Activated CD4-positive, alpha-beta T cell treated with anti-CD3 and anti-CD28 coated beads for 36 hours (primary cell): ENCODE measurements at regions of chr3 and their contacts with region 1.

Region 1: DNA sequence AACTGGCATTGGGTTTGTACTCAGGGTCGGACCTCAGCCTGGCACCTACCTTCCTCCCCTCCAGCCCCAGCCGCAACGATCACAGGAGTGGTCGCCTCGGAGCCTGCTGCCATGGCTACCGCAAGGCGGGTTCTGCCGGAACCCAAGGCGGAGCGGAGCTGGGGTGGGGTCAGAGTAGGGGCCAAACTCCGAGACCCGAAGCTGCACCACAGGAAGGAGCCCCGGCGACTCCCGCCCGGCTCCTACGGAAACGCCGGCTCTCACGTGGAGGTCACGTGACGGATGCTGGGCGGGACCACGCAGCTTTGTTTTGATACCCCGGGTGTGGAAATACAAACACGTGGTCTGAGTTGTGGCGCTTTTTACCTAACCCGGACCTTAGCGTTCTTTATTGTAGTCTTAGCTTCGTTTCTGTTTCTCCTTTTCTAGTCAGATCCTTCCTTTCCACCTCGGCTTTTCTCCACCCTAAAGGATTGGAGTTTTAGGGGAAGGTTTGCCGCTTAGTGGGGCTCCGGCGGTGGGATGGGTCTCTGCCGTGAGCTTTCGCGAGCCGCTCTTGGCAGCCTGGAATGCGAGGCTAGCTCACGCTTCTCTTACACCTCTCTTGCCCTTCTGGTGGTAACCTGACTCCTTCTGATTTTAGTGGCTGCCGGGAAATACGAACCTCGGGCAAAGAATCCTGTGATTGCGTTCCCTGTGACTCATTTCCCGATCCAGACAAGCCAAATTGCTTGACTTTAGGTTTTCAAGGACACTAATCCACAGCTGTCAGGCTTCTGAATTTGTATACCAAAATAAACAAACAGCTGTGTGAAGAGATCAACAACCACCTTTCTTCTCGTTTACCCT is at the start of gene HSPBAP1:
- DNase-seq: peak; percentile 93
- ATAC-seq: peak; percentile 67
- H3K4me3 Mint-ChIP-seq: no peak within 1 kb of the TSS
- H3K27ac Mint-ChIP-seq: peak within 1 kb of the TSS; percentile 86
- H3K4me1 Mint-ChIP-seq: peaks cover 32% of the 10 kb centered on the region
- H3K27me3 Mint-ChIP-seq: no peaks in the 10 kb centered on the region
- total RNA-seq, gene HSPBAP1: 3.9 to 4.4 TPM

Region 2: DNA sequence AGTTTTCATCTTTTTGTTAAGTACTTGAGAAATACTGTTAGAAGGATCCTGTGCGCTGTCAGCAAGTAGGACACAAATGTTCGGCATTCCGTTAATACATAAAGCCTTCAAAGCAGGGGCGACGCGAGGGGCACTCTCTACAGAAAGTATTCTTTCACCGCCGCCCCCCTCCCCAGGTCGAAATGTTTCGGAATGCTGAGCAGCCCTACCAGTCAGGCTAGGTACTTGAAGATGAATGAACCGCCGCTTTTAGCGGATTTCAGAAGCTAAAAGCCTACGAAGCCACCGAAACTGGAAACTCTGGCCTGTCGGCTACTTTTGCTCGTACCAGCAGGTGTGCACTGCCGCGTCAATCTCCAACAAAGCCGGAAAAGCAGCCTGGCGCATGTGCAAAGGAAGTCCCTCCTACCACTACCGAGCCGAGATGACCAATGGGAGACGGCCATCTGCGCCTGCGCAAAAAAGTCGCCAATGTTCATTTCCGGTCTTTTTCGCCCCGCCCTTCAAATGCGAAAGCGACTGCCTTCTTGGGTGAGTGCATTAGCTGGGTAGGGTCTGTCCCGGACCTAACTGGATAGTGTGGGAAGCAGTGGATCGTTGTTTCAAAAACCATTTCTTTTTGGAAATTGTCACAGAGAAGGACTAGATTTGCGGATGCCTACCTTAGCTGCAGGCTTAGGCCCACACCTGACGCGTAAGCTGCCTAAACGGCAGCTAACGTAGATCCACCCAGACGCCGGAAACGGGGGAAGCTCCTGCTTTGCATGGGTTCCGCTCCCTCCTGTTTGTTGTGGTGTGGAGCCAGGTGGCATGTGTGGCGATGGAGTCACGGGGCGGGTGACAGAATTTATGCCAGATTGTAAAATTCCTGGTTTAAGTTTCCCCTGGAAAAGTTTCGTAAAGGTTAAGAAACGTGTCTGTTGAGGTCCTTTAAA is 377.8 kb before region 1 on chr3 and contains the start of gene WDR5B:
- CTCF ChIA-PET with region 1: no interaction called
- POLR2A ChIA-PET with region 1: no interaction called
- intact Hi-C with region 1: loop called (anchors 1 to 10 kb)
- DNase-seq: peak; percentile 99
- ATAC-seq: peak; percentile 91
- H3K4me3 Mint-ChIP-seq: peak within 1 kb of the TSS; percentile 96
- H3K27ac Mint-ChIP-seq: peak within 1 kb of the TSS; percentile 96
- H3K4me1 Mint-ChIP-seq: peaks cover 46% of the 10 kb centered on the region
- H3K27me3 Mint-ChIP-seq: no peaks in the 10 kb centered on the region
- total RNA-seq, gene WDR5B: 2.6 to 2.8 TPM

Region 3: DNA sequence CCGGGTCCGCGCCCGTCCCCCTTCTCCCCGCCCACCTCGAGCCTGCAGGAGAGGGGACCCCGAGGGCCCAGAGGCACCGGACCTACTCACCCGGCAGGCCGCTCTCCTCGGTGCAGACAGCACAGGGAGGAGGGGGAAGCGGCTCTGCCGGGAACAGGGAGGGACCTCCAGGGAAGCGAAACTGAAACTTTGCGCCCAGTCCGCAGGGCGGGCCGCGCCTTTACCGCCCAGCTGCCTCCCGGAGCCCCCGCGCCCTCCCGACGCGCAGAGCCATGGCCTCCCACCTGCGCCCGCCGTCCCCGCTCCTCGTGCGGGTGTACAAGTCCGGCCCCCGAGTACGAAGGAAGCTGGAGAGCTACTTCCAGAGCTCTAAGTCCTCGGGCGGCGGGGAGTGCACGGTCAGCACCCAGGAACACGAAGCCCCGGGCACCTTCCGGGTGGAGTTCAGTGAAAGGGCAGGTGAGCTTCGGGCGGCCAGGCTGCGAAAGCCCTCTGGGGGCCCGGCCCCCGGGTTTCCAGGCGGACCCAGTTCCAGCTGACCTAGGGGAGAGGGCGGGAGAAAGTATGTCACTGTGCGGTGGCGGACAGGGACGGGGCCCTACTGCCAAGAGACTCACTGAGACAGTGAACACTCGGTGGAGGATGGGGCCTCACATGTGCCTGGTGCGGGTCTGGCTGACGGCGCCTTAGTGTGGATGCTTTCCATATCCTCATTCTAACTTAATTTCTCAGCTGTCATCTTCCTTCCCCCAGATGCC is 229.5 kb before region 1 on chr3 and contains the starts of genes DTX3L and PARP9:
- CTCF ChIA-PET with region 1: no interaction called
- POLR2A ChIA-PET with region 1: no interaction called
- intact Hi-C with region 1: loop called in 1 of 2 experiments (anchors 5 kb)
- DNase-seq: peak; percentile 89
- ATAC-seq: peak; percentile 83
- H3K4me3 Mint-ChIP-seq: peak within 1 kb of the TSS; percentile 83
- H3K27ac Mint-ChIP-seq: peak within 1 kb of the TSS; percentile 97
- H3K4me1 Mint-ChIP-seq: peaks cover 67% of the 10 kb centered on the region
- H3K27me3 Mint-ChIP-seq: no peaks in the 10 kb centered on the region
- total RNA-seq, gene DTX3L: 42.0 to 52.0 TPM
- total RNA-seq, gene PARP9: 39.9 to 46.0 TPM

Region 4: GRCh38 chr3:123036352-123037014 is 242.7 kb after region 1 on chr3:
- CTCF ChIA-PET with region 1: no interaction called
- POLR2A ChIA-PET with region 1: no interaction called
- intact Hi-C with region 1: no loop called
- DNase-seq: no peak
- ATAC-seq: no peak
- H3K4me3 Mint-ChIP-seq: no peak overlapping the region
- H3K27ac Mint-ChIP-seq: no peak overlapping the region
- H3K4me1 Mint-ChIP-seq: no peaks in the 10 kb centered on the region
- H3K27me3 Mint-ChIP-seq: peaks cover 28% of the 10 kb centered on the region

Region 5: GRCh38 chr3:123066896-123067688 is 273.3 kb after region 1 on chr3 and contains the start of gene PDIA5:
- CTCF ChIA-PET with region 1: no interaction called
- POLR2A ChIA-PET with region 1: interaction called, 3 read pairs
- intact Hi-C with region 1: loop called in 1 of 2 experiments (anchors 2 kb)
- DNase-seq: peak; percentile 87
- ATAC-seq: peak; percentile 83
- H3K4me3 Mint-ChIP-seq: peak within 1 kb of the TSS; percentile 87
- H3K27ac Mint-ChIP-seq: peak within 1 kb of the TSS; percentile 80
- H3K4me1 Mint-ChIP-seq: peaks cover 40% of the 10 kb centered on the region
- H3K27me3 Mint-ChIP-seq: no peaks in the 10 kb centered on the region
- total RNA-seq, gene PDIA5: 19.5 to 20.7 TPM

Region 6: GRCh38 chr3:123201566-123202427 is 408.0 kb after region 1 on chr3 and contains the start of gene SEC22A:
- CTCF ChIA-PET with region 1: no interaction called
- POLR2A ChIA-PET with region 1: no interaction called
- intact Hi-C with region 1: loop called (anchors 1 to 5 kb)
- DNase-seq: peak; percentile 98
- ATAC-seq: peak; percentile 99
- H3K4me3 Mint-ChIP-seq: peak within 1 kb of the TSS; percentile 96
- H3K27ac Mint-ChIP-seq: peak within 1 kb of the TSS; percentile 97
- H3K4me1 Mint-ChIP-seq: peaks cover 28% of the 10 kb centered on the region
- H3K27me3 Mint-ChIP-seq: no peaks in the 10 kb centered on the region
- total RNA-seq, gene SEC22A: 13.2 to 16.3 TPM

Region 7: DNA sequence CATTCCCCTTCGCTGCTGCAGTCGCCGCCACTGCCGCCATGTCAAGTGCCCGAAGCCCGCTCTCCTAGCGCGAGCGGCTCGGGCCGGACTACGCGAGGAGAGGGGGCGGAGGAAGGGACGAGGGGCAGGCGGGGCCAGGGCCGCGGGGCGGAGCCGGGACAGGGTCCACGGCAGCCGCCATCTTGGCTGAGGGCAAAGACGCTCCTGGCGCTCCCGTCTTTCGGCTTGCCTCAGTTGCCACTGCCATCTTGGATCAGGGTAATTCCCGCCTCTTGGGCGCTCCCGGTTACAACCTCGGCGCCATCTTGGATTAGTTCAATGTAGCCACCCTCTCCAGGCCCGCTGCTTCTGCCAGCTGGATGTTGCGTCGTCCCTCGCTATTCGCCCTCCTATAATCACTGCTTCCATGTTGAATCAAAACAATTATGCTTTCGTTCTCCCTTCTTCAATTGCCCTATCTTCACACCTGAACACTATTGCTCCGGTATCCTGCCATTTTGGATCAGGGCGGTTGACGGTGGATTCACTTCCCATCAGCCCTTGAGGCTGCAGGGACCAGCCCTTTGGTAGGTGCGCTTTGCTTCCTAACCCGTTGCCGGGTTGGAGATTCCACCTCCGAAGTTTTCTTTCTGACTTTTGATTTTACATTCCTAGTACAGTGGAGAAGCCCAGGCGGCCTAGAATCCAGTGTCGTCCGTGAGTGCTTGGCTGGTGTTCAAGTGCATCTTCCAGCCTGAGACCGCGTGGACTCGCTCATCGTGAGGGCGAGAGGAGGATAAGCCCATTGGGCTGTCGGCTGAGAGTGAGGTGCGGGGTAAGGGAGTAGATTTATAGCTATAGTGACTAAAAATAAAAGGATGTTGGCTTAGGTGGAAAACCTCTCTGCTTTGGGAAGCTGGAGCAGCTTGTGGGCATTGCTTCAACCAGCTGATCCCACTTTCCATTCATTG is 791.5 kb after region 1 on chr3 and contains the start of gene HACD2:
- CTCF ChIA-PET with region 1: no interaction called
- POLR2A ChIA-PET with region 1: no interaction called
- intact Hi-C with region 1: loop called in 1 of 2 experiments (anchors 10 kb)
- DNase-seq: peak; percentile 97
- ATAC-seq: peak; percentile 93
- H3K4me3 Mint-ChIP-seq: no peak within 1 kb of the TSS
- H3K27ac Mint-ChIP-seq: peak within 1 kb of the TSS; percentile 87
- H3K4me1 Mint-ChIP-seq: peaks cover 21% of the 10 kb centered on the region
- H3K27me3 Mint-ChIP-seq: no peaks in the 10 kb centered on the region
- total RNA-seq, gene HACD2: 22.1 to 27.7 TPM